PC-9 (cell line): ENCODE measurements at regions of chr7 and their contacts with region 1.

Region 1: GRCh38 chr7:46764100-46764936 is 817.6 kb downstream of the TNS3 start:
- DNase-seq: peak; percentile 82 to 95
- H3K4me3 ChIP-seq: no peak overlapping the region
- H3K27ac ChIP-seq: peak overlapping the region; percentile 69
- H3K4me1 ChIP-seq: peaks cover 32% of the 10 kb centered on the region
- H3K27me3 ChIP-seq: no peaks in the 10 kb centered on the region
- CTCF ChIP-seq: no peak

Region 2: DNA sequence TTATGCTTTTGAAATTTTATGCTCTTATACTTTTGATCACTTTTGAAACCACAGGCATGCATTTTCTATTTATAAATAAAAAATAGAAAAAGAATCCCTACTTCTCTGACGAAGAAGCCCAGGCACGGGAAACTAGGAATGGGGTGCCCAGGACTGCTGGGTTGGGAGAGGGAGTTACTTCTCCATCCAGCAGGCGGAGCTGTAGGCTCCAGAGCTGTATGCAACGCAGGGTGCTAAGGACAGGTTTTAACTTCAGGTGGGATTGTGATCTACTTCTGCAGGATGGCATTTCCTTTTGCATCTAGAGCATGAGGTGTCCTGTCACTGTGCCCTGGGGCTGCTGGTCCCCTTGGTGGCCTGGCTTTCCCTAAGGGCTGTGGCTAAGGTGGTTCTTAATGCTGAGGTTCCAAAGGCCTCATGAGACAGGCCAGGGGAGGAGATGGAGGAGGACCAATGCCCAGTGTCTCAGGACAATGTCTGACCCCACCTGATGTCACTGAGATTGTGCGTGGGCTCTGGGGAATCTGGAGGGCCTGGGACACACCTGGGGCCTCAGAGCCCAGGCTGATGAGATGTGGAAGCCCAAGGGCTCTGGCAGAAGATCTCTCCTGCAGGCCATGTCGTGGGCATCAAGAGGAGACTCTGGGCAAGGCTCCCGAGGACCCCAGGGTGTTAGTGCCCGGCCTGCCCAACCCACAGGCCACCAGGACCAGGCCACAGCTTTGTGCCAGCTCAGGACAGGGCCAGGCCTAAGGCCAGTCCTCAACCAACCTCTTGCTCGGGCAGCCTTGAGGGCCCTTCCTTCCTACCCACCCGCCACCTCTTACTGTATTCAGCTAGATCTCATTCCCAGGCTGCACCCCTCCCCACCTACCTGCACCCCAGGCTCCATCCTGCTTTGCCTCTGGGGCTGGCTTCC is 891.9 kb before region 1 on chr7:
- CTCF ChIA-PET with region 1: no interaction called
- POLR2A ChIA-PET with region 1: no interaction called
- intact Hi-C with region 1: no loop called
- DNase-seq: peak; percentile 35 to 49
- H3K4me3 ChIP-seq: no peak overlapping the region
- H3K27ac ChIP-seq: no peak overlapping the region
- H3K4me1 ChIP-seq: peaks cover 37% of the 10 kb centered on the region
- H3K27me3 ChIP-seq: no peaks in the 10 kb centered on the region
- CTCF ChIP-seq: peak; percentile 76

Region 3: DNA sequence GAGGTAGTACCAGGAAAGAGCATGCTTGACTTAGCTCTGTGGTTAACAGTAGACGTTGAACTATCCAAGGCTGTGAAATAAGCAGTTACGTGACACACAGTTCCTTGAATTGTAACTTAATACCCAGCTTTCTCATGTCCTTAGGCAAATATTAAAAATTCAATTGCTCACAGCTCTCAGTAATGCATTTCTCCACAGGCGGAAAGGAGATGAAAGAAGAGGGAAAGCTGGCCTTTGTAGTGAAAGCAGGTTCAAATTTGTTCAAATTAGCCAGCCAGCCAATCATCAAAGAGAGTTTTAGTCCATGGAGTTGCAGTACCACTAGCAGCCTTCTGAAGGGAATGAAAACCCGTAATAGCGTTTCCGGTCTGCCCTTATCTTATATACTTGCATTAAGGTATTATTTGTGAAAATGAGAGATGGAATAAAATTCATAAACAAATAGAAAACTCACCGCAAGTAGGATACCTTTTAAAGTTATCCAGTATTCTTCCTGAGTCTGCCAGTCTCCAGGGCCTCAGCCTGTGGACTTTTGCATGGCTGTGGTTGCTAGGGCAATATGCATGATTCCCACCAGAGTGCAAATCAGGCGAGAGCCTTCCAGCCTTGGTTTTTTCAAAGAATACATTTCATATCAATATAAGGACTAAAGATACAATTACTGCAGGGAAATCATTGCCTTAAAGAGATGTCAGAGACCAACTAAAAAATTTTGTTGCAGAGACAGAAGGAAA is 22.1 kb after region 1 on chr7:
- CTCF ChIA-PET with region 1: no interaction called
- POLR2A ChIA-PET with region 1: no interaction called
- intact Hi-C with region 1: loop called (anchors 1 kb)
- DNase-seq: peak; percentile 40 to 95
- H3K4me3 ChIP-seq: no peak overlapping the region
- H3K27ac ChIP-seq: peak overlapping the region; percentile 60
- H3K4me1 ChIP-seq: peaks cover 35% of the 10 kb centered on the region
- H3K27me3 ChIP-seq: no peaks in the 10 kb centered on the region
- CTCF ChIP-seq: no peak